ENCODE measurements at regions of chr16 and their contacts with region 1.

Region 1: GRCh38 chr16:89084411-89084810 is 9.2 kb upstream of the ACSF3 start:
- DNase-seq: no peak
- H3K4me3 ChIP-seq: no peak overlapping the region
- H3K27ac ChIP-seq: no peak overlapping the region
- H3K4me1 ChIP-seq: peaks cover 0 to 7% (median 2%) of the 10 kb centered on the region in 4 experiments; a peak in 6 of 7 replicates
- H3K27me3 ChIP-seq: no peaks in the 10 kb centered on the region; a peak in 1 of 7 replicates
- CTCF ChIP-seq: no peak
- EP300 ChIP-seq: no peak
- POLR2A ChIP-seq: no peak
- RAD21 ChIP-seq: no peak

Region 2: DNA sequence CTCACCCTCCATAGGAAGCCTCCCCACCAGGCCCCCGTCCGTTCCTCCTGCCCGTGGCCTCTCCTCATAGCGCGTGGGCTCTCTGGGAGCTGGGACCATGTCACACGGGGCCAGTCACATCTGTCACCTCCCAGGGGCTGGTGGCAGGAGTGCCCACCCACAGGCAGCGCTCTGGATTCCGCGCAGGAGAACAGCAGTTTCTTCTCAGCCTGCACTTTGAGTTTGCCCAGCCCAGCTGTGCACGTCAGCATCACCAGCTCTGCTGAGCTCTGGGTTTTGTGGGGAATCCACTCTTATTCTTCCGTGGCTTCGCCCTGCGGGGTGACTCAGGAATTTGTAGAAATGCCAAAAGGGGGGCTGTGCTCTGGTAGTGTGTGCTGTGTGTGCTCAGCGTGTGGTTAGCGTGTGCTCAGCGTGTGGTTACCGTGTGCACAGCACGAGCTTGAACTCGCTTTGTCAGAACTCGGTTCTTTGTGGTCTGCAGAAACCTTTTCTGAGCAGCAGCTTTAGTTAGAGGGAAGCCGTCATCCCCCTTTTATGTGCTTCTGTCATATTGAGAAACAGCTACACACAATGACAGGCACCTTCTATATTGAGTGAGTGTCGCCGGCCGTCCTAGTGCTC is 12.5 kb after region 1 on chr16:
- CTCF ChIA-PET with region 1: interaction called, 7 read pairs
- POLR2A ChIA-PET with region 1: interaction called, 10 read pairs
- DNase-seq: no peak
- H3K4me3 ChIP-seq: no peak overlapping the region
- H3K27ac ChIP-seq: no peak overlapping the region
- H3K4me1 ChIP-seq: peaks cover 4 to 19% (median 11%) of the 10 kb centered on the region in 4 experiments; a peak in 6 of 7 replicates
- H3K27me3 ChIP-seq: peaks cover 0 to 10% (median 8%) of the 10 kb centered on the region in 4 experiments; a peak in 5 of 7 replicates
- CTCF ChIP-seq: no peak
- EP300 ChIP-seq: no peak
- POLR2A ChIP-seq: no peak
- RAD21 ChIP-seq: no peak

Measured in H1 (cell line).